Natural killer cell (primary cell): ENCODE measurements at regions of chr12 and their contacts with region 1.

Region 1: DNA sequence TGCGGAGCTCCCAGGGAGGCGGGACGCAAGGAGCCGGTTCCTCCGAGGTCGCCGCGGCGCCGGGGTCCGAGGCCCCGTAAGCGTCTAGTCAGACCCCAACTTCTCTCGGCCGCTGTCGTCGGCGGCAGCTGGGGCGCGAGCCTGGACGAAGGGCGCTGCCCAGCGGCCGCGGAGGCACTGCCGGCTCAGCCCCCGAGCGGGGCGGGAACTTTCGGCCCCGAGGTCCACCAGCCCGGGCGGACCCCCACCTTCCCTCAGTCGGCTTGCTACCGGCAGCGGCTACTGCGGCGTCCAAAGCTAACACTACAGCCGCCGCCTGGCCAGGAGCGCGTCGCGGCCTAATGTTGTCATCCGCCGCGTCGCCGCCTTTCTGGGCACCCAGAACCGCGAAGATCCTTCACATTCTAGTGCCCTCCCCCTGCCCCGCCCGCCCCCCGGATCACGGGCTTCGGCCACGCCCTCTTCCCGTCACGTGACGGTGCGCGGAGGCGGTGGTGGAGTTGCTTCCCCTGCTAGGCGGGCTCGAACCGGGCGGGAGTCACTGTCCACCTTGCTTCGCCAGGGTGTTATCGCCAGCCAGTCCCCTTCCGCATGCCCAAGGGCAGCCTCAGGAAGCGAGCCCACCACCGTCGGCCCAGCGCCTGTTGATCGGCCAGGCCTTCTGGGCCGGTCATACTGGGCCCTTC is at the start of gene OSBPL8:
- DNase-seq: peak; percentile 95 to 96
- ATAC-seq: peak; percentile 76 to 90 (median 78)
- H3K4me3 ChIP-seq: peak within 1 kb of the TSS; percentile 99
- H3K4me3 Mint-ChIP-seq: peak within 1 kb of the TSS; percentile 95
- H3K27ac ChIP-seq: peak within 1 kb of the TSS; percentile 95
- H3K27ac Mint-ChIP-seq: peak within 1 kb of the TSS; percentile 94
- H3K4me1 ChIP-seq: peaks cover 15% of the 10 kb centered on the region
- H3K4me1 Mint-ChIP-seq: peaks cover 29 to 37% of the 10 kb centered on the region in 2 donors
- H3K27me3 ChIP-seq: no peaks in the 10 kb centered on the region
- H3K27me3 Mint-ChIP-seq: no peaks in the 10 kb centered on the region
- CTCF ChIP-seq: no peak
- total RNA-seq, gene OSBPL8: 133 to 154 (median 138) TPM

Region 2: DNA sequence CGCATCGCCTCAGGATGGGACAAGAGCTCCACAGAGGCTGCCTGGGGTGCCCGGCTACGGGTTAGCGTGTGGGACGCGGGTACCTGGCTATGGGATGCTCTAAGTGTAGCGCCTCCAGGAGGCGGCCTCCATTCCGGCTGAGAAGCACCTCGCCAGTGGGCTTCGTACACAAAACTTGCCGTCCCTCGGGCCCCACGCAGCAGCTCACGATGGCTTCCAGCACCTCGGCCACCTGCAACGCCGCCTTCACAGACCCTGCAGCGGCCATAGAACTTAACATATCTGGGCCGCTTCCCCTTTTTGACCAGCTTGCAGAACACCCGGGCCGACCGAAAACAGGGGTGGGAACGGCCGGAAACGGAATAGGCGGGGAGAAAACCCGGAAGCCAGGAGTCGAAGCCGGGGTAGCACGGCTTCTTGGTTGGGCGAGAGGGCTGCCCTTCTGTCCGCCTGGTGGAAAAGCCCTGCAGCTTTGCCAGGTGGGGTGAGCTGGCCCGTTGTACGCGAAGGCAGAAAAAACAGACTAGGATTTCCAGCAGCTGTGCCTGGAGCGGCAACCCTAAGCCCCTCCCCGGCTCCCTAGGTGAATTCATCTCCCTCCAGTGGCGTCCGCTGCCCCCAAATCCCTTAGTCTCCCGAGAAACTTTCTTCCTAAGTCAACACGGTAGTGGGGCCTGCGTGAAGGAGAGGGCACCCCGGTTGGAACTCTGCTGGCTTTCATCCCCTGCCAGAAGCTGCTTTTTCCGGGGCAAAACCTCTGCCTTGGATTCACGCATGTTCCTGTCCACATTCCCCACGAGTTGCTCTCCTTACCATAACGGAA is 211.3 kb before region 1 on chr12 and contains the start of gene BBS10:
- intact Hi-C with region 1: loop called (anchors 1 kb)
- DNase-seq: peak; percentile 74 to 92
- ATAC-seq: peak; percentile 97 to 99 (median 97)
- H3K4me3 ChIP-seq: peak within 1 kb of the TSS; percentile 65
- H3K4me3 Mint-ChIP-seq: peak within 1 kb of the TSS; percentile 93
- H3K27ac ChIP-seq: peak within 1 kb of the TSS; percentile 89
- H3K27ac Mint-ChIP-seq: peak within 1 kb of the TSS; percentile 84 to 91
- H3K4me1 ChIP-seq: peaks cover 9% of the 10 kb centered on the region
- H3K4me1 Mint-ChIP-seq: peaks cover 19 to 20% of the 10 kb centered on the region in 2 donors
- H3K27me3 ChIP-seq: no peaks in the 10 kb centered on the region
- H3K27me3 Mint-ChIP-seq: no peaks in the 10 kb centered on the region
- CTCF ChIP-seq: peak; percentile 36
- total RNA-seq, gene BBS10: 2.8 to 4.0 (median 3.3) TPM

Region 3: GRCh38 chr12:76529226-76529918 is 30.2 kb before region 1 on chr12:
- intact Hi-C with region 1: no loop called
- DNase-seq: no peak
- ATAC-seq: no peak
- H3K4me3 ChIP-seq: no peak overlapping the region
- H3K4me3 Mint-ChIP-seq: no peak overlapping the region
- H3K27ac ChIP-seq: no peak overlapping the region
- H3K27ac Mint-ChIP-seq: peak overlapping the region in 1 of 2 donors; percentile 8
- H3K4me1 ChIP-seq: no peaks in the 10 kb centered on the region
- H3K4me1 Mint-ChIP-seq: peaks cover 49 to 60% of the 10 kb centered on the region in 2 donors
- H3K27me3 ChIP-seq: no peaks in the 10 kb centered on the region
- H3K27me3 Mint-ChIP-seq: no peaks in the 10 kb centered on the region
- CTCF ChIP-seq: no peak

Region 4: GRCh38 chr12:76586764-76587395 is 27.3 kb after region 1 on chr12:
- intact Hi-C with region 1: loop called (anchors 2 kb)
- DNase-seq: peak in 1 of 2 donors; percentile 76
- ATAC-seq: peak; percentile 49 to 57 (median 54)
- H3K4me3 ChIP-seq: no peak overlapping the region
- H3K4me3 Mint-ChIP-seq: no peak overlapping the region
- H3K27ac ChIP-seq: no peak overlapping the region
- H3K27ac Mint-ChIP-seq: peak overlapping the region in 1 of 2 donors; percentile 59
- H3K4me1 ChIP-seq: peaks cover 7% of the 10 kb centered on the region
- H3K4me1 Mint-ChIP-seq: peaks cover 12 to 30% of the 10 kb centered on the region in 2 donors
- H3K27me3 ChIP-seq: no peaks in the 10 kb centered on the region
- H3K27me3 Mint-ChIP-seq: no peaks in the 10 kb centered on the region
- CTCF ChIP-seq: peak; percentile 72

Region 5: DNA sequence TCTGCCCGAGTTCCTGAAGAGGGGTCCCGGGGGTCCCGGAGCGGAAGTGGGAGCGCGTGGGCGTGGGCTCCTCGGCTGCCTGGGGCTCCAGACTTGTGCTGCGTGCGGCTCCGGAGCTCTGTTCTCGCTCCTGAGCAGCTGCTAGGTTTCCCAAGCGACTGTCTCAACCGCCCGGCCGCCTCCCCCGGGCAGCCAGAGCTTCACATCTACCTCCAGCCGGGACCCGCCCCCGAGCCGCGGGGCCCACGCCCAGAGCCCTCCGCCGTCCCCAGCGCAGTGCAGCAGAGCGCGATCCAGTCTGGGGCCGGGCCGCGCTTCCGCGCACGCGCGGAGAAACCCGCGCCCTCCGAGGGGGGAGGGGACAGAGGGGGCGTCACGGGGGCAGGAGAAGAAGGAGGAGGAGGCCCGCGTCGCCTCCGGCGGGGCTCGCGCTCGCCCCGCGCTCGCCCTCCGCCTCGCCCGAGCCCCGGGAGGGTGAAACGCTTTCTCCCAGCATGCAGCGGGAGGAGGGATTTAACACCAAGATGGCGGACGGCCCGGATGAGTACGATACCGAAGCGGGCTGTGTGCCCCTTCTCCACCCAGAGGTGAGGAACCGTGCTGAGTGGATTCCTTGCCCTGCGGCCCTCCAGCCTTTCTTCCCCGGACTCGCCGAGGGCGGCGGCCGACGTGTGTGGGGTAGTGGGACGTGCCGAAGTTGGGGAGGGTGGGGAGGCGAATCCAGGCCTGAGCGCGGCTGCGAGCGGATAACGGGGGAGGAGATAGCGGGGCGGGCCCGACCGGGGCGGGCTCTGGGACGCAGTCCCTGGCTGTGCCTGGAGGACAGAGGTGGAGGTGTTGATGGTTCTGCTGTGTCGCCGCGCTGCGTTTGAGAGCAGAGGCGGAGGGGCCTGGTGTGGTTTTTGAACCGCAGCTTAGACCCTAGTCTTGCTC is 204.5 kb after region 1 on chr12 and contains the start of gene ZDHHC17:
- intact Hi-C with region 1: loop called (anchors 2 kb)
- DNase-seq: peak; percentile 88 to 95
- ATAC-seq: peak; percentile 85 to 94 (median 85)
- H3K4me3 ChIP-seq: peak within 1 kb of the TSS; percentile 93
- H3K4me3 Mint-ChIP-seq: peak within 1 kb of the TSS; percentile 94
- H3K27ac ChIP-seq: peak within 1 kb of the TSS; percentile 96
- H3K27ac Mint-ChIP-seq: peak within 1 kb of the TSS; percentile 90 to 96
- H3K4me1 ChIP-seq: peaks cover 13% of the 10 kb centered on the region
- H3K4me1 Mint-ChIP-seq: peaks cover 40 to 42% of the 10 kb centered on the region in 2 donors
- H3K27me3 ChIP-seq: no peaks in the 10 kb centered on the region
- H3K27me3 Mint-ChIP-seq: peaks cover 0 to 4% of the 10 kb centered on the region in 2 donors
- CTCF ChIP-seq: no peak
- total RNA-seq, gene ZDHHC17: 55.2 to 63.9 (median 58.4) TPM